Pancreas (tissue), 10 donors: ENCODE measurements at regions of chr11 and their contacts with region 1.

Region 1: DNA sequence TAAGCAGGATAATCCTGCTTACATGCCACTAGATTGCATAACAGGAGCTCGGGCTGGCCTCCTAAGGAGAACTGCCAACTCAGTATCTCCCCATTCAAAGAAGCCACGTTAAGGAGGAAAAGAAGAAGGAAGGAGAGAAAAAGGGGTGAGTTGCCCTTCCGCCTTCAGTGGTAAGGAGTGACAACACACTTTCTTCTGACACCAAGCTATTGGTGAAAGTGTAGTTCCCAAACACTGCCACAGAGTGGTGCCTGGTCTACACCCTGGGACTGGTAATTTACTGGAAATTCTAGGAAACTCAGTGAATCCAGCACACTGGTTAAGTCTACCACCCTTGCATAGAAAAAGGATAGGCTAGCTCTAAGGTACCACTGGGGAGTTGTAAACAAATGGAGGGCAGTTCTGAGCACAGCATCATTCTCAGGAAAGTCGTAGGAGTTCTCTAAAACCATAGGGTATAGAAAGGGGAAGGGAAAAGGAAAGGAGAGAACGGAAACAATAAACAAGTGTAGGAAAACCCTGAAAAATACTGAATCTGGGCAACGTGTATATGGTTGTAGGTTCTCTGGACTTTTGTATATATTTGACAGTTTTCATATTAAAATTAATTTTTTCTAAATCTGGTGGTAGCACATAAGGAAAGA is 58.2 kb downstream of the RRAS2 start:
- DNase-seq: peak in 3 of 6 donors; percentile 26 to 58 (median 28)
- ATAC-seq: peak; percentile 80 to 98 (median 96)
- H3K4me3 ChIP-seq: no peak overlapping the region
- H3K27ac ChIP-seq: no peak overlapping the region
- H3K4me1 ChIP-seq: peaks cover 0 to 3% (median 0%) of the 10 kb centered on the region in 3 donors
- H3K27me3 ChIP-seq: no peaks in the 10 kb centered on the region
- CTCF ChIP-seq: peak; percentile 33 to 70 (median 54)

Region 2: GRCh38 chr11:14336507-14337503 is 36.0 kb after region 1 on chr11:
- intact Hi-C with region 1: no loop called
- DNase-seq: no peak
- ATAC-seq: peak in 1 of 4 donors; percentile 43
- H3K4me3 ChIP-seq: no peak overlapping the region
- H3K27ac ChIP-seq: no peak overlapping the region
- H3K4me1 ChIP-seq: no peaks in the 10 kb centered on the region
- H3K27me3 ChIP-seq: no peaks in the 10 kb centered on the region
- CTCF ChIP-seq: no peak

Region 3: DNA sequence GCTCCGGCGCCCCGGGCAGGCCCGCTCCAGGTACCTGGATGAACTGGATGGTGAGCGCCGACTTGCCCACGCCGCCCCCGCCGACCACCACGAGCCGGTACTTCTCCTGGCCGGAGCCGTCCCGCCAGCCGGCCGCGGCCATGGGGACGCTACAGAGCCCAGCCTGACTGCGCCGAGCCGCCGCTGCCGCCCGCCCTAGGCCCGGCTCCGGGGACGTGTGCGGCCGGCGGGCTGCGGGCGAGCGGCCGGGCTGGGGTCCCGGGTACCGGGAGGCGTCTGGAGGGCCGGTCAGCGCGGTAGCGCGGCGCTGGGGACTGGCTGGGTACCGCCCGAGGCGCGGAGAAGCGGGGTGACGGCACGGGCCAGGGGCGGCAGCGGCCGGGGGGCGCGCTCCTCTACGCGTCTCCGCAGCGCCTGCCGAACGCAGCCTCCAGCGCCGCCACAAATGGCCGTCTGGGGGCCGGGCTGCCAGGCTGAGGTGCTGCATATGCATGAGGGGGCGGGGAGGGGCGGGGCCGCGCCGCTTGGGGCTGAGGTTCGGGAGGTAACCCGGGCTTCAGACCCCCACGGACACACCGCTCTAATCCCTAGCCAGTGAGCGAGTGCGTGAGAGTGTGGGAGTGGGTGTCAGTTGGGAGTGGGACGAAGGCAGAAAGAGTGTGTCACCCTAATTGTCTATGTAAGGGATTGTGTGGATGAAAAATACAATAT is 58.1 kb after region 1 on chr11 and contains the start of gene RRAS2:
- intact Hi-C with region 1: no loop called
- DNase-seq: peak; percentile 69 to 91 (median 78)
- ATAC-seq: peak; percentile 83 to 90 (median 88)
- H3K4me3 ChIP-seq: peak within 1 kb of the TSS; percentile 78 to 85 (median 80)
- H3K27ac ChIP-seq: peak within 1 kb of the TSS; percentile 66 to 84 (median 82)
- H3K4me1 ChIP-seq: peaks cover 0 to 5% (median 5%) of the 10 kb centered on the region in 3 donors
- H3K27me3 ChIP-seq: no peaks in the 10 kb centered on the region
- CTCF ChIP-seq: no peak
- total RNA-seq, gene RRAS2: 14.0 to 21.8 (median 15.6) TPM

Region 4: DNA sequence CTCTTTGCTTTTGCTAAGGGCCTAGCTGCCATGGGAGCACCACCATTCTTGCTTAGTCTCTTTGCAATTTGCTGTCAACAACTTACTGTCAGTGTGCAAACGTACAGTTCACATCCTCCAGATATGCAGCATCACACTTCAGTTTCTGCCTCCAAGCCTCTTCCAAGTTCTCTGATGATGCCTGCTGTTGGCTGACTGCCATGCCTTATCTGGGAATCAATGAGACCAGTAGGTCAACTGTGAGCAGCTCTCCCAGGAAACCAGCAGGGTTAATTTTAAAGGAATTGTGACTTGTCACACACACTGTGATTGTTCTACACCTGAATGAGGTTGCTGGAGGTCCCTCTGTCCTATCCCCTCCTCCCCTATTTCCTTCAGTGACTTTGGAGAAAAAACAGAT is 142.9 kb after region 1 on chr11:
- intact Hi-C with region 1: loop called in 1 of 3 experiments (anchors 10 kb)
- DNase-seq: peak in 4 of 6 donors; percentile 38 to 65 (median 57)
- ATAC-seq: peak; percentile 51 to 78 (median 66)
- H3K4me3 ChIP-seq: no peak overlapping the region
- H3K27ac ChIP-seq: peak overlapping the region in 2 of 4 donors; percentile 13 to 50
- H3K4me1 ChIP-seq: peaks cover 0 to 7% (median 6%) of the 10 kb centered on the region in 3 donors
- H3K27me3 ChIP-seq: no peaks in the 10 kb centered on the region
- CTCF ChIP-seq: no peak

Region 5: GRCh38 chr11:14454861-14455632 is 154.3 kb after region 1 on chr11:
- intact Hi-C with region 1: loop called in 1 of 3 experiments (anchors 5 kb)
- DNase-seq: peak in 1 of 6 donors; percentile 15
- ATAC-seq: peak; percentile 47 to 77 (median 68)
- H3K4me3 ChIP-seq: no peak overlapping the region
- H3K27ac ChIP-seq: no peak overlapping the region
- H3K4me1 ChIP-seq: no peaks in the 10 kb centered on the region
- H3K27me3 ChIP-seq: no peaks in the 10 kb centered on the region
- CTCF ChIP-seq: peak in 3 of 4 donors; percentile 21 to 34 (median 32)